Activated CD4-positive, alpha-beta T cell treated with anti-CD3 and anti-CD28 coated beads for 36 hours (primary cell): ENCODE measurements at regions of chr3 and their contacts with region 1.

Region 1: GRCh38 chr3:101381809-101382208 is 61.4 kb upstream of the IMPG2 start:
- DNase-seq: no peak
- ATAC-seq: no peak
- H3K4me3 Mint-ChIP-seq: no peak overlapping the region
- H3K27ac Mint-ChIP-seq: no peak overlapping the region
- H3K4me1 Mint-ChIP-seq: peaks cover 60% of the 10 kb centered on the region
- H3K27me3 Mint-ChIP-seq: no peaks in the 10 kb centered on the region

Region 2: DNA sequence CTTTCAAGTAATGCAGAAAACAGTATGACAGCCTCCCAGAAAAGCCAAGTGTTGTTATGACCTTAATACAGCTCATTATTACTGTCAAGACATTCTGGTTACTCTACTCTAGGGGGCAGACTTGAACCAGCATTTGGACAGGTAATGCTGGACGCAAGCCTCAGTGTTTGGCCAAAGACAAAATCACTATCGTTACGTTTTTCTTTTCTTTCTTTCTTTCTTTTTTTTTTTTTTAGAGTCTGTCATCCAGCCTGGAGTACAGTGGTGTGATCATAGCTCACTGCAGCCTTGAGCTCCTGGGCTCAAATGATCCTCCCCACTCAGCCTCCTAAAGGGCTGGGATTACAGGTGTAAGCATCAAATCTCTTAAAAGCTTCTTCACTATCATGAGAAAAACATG is 918.8 kb before region 1 on chr3:
- CTCF ChIA-PET with region 1: no interaction called
- POLR2A ChIA-PET with region 1: no interaction called
- intact Hi-C with region 1: loop called in 1 of 2 experiments (anchors 5 kb)
- DNase-seq: peak; percentile 22
- ATAC-seq: peak; percentile 94
- H3K4me3 Mint-ChIP-seq: no peak overlapping the region
- H3K27ac Mint-ChIP-seq: no peak overlapping the region
- H3K4me1 Mint-ChIP-seq: no peaks in the 10 kb centered on the region
- H3K27me3 Mint-ChIP-seq: peaks cover 2% of the 10 kb centered on the region

Region 3: GRCh38 chr3:101069901-101070798 is 311.7 kb before region 1 on chr3:
- CTCF ChIA-PET with region 1: interaction called, 3 read pairs
- POLR2A ChIA-PET with region 1: no interaction called
- intact Hi-C with region 1: loop called (anchors 1 kb)
- DNase-seq: peak; percentile 88
- ATAC-seq: peak; percentile 85
- H3K4me3 Mint-ChIP-seq: no peak overlapping the region
- H3K27ac Mint-ChIP-seq: no peak overlapping the region
- H3K4me1 Mint-ChIP-seq: peaks cover 4% of the 10 kb centered on the region
- H3K27me3 Mint-ChIP-seq: peaks cover 19% of the 10 kb centered on the region

Region 4: DNA sequence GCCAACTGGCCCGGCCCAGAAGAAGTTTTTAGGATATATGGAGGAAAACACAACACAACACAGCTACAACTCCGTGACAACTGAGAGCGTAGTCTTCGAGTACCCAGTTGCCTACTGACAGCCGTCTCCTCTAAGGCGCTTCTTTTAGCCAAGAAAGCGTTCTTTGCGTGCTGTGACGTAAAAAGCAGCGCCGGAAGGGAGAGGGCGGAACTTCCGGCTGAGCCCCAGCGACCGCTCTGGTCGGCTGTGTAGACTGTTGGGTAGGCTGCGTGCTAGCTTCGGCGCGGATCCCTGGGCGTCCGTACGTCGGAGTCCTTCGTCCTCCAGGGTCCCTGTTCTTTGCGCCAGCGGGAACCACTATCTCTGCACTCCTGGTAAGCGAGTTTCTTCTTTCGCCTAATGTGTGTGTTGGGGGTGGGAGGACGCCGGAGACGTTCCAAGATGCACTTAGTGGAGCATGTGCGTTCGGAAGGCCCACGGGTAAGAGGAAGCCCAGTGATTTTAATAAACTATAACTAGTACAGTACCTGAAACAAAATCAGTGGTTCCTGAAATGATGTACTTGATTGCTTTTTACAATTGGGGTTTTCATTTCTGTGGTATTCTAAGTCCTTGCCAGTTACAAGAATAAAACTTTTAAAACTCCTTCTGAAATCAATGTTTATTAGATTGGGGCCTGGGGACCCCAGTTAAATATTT is 180.0 kb after region 1 on chr3 and contains the start of gene TRMT10C:
- CTCF ChIA-PET with region 1: no interaction called
- POLR2A ChIA-PET with region 1: no interaction called
- intact Hi-C with region 1: loop called in 1 of 2 experiments (anchors 5 kb)
- DNase-seq: peak; percentile 96
- ATAC-seq: peak; percentile 98
- H3K4me3 Mint-ChIP-seq: peak within 1 kb of the TSS; percentile 93
- H3K27ac Mint-ChIP-seq: peak within 1 kb of the TSS; percentile 96
- H3K4me1 Mint-ChIP-seq: peaks cover 42% of the 10 kb centered on the region
- H3K27me3 Mint-ChIP-seq: peaks cover 4% of the 10 kb centered on the region
- total RNA-seq, gene TRMT10C: 54.3 to 55.4 TPM

Region 5: DNA sequence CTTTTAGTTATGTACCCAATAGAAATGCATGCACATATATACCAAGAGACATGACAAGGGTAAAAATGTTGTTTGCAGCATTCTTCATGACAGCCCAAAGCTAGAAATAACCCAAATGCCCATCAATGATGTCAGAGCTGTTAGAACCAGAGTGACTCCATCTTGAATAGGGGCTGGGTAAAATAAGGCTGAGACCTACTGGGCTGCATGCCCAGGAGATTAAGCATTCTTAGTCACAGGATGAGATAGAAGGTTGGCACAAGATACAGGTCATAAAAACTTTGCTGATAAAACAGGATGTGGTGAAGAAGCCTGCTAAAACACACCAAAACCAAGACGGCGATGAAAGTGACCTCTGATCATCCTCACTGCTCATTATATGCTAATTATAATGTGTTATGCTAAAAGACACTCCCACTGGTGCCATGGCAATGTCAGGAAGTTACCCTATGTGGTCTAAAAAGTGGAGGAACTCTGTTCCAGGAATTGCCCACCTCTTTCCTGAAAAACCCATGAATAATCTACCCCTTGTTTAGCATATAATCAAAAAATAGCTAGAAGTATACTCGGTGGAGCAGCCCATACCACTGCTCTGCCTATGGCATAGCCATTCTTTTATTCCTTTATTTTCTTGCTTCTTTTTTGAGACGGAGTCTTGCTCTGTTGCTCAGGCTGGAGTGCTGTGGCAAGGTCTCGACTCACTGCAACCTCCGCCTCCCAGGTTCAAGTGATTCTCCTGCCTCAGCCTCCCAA is 262.2 kb after region 1 on chr3:
- CTCF ChIA-PET with region 1: no interaction called
- POLR2A ChIA-PET with region 1: no interaction called
- intact Hi-C with region 1: loop called (anchors 5 kb)
- DNase-seq: peak; percentile 67
- ATAC-seq: peak; percentile 83
- H3K4me3 Mint-ChIP-seq: no peak overlapping the region
- H3K27ac Mint-ChIP-seq: peak overlapping the region; percentile 90
- H3K4me1 Mint-ChIP-seq: peaks cover 29% of the 10 kb centered on the region
- H3K27me3 Mint-ChIP-seq: no peaks in the 10 kb centered on the region